Activated T-helper 1 cell treated with anti-CD3 and anti-CD28 coated beads, Interleukin-12 subunit alpha, Interleukin-12 subunit beta, Interleukin-2, Interleukin-4 antibody, amounts not matched to agents 30 ng/mL and 10 ng/mL and 1 ng/mL, durations not matched to agents 14 hours and 24 hours and 36 hours (primary cell): ENCODE measurements at regions of chr19 and their contacts with region 1.

Region 1: DNA sequence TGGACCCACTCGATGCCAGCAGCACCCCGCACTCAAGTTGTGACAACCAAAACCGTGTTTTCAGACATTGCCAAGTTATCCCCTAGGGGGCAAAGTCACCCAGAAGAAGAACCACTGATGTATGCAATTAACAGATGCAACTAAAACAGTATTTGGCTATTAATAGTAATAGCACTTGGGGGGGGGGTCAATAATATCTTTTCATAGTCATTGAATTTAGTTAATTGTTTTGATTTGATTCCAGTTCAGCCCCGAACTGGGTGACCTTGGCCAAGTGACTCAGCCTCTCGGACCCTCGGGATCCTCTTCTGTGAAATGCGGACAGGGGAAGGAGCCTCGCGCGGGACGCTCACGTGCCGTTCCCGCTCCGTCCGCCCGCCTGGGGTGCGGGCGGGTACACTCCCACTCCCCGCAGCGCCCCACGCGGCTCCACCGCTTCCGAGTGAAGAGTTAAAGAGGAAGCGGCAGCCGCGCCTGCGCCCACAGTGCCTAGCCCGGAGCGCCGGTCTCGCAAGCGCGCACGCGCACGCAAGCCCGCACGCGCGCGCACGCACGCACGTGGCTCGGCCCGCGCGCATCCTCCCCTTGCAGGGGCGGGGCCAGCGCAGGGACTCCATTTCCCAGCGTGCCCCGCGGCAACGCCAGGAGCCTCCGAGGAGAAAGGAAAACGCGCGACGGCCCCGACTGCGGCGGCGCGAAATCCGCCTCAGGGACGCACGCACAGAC is 449 bp upstream of the DAZAP1 start:
- DNase-seq: peak; percentile 100
- H3K4me3 Mint-ChIP-seq: peak overlapping the region; percentile 76
- H3K27ac Mint-ChIP-seq: peak overlapping the region; percentile 83
- H3K4me1 Mint-ChIP-seq: peaks cover 33% of the 10 kb centered on the region
- H3K27me3 Mint-ChIP-seq: peaks cover 7% of the 10 kb centered on the region

Region 2: DNA sequence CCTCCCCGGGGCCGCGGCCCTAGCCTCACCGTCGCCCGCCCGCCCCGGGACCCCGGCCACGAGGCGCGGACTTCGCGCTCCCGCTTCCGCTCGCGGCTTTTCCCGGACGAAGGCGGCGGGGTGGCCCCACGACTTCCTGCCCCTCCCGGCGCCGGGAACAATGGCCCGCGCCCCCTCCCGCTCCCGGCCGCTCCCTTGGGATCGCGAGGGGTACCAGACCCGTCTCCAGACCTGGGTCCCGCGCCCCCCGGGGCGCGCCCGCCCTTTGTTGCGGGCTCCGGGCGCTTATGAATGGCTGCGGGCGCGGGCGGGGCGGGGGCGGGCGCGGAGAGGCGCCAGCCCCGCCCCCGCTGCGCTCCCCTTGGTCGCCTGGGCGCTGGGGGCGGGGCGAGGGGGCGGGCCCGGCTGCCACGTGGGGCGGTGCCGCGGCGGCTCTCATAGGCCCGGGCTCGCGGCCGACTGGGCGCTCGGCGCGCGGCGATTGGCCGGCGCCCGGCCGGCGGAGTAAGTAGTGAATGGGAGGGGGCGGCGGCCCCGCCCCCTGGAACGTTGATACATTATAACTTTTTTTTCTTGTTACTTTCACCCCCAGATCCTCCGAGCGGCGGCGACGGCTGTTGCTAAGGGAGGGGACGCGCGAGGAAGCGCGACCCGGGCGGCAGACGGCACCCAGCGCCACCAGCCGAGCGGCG is 157.5 kb before region 1 on chr19:
- intact Hi-C with region 1: no loop called
- DNase-seq: peak; percentile 91
- H3K4me3 Mint-ChIP-seq: peak overlapping the region; percentile 82
- H3K27ac Mint-ChIP-seq: peak overlapping the region; percentile 86
- H3K4me1 Mint-ChIP-seq: peaks cover 5% of the 10 kb centered on the region
- H3K27me3 Mint-ChIP-seq: no peaks in the 10 kb centered on the region

Region 3: DNA sequence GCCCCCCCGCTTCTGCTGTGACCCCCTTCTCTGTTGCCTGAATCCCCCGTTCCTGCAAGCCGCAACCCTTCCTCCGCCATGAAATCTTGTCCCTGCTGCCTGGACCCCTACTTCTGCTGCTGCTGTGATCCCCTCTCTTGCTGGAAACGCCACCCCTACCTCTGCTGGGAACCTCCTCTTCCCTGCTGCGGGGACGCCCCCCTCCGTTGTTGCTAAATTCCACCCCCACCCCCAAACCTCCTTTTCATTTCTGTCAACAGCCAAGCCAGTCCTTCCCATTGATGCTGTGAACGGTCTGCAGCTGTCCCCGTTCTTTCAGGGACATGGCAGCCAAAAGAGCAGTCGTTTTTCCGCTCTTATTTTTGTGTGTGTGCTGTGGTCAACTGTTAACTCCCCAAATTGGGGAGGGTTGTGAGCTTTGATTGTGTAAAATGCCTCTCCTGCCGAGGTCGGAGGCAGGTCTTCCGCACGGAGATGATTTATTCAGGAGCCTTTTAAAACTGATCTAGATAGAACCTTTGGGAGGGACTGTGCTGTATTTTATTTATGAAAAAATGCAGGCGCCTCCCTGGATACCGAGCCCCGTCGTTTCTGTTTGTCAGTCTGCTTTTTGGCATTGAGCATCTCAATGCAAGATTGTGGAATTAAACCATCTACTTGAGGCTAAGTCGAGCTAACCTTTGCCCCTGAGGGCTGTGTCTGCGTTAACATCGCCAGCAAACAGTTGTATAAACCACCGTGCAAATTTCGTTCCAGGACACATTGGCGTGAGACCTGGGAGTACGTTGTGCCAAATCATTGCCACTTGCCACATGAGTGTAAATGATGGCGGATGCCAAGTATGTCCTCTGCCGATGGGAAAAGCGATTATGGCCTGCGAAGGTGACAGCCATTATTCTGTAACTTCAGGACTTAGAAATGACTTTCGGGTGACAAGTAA is 51.1 kb before region 1 on chr19:
- intact Hi-C with region 1: loop called (anchors 2 kb)
- DNase-seq: no peak
- H3K4me3 Mint-ChIP-seq: peak overlapping the region; percentile 88
- H3K27ac Mint-ChIP-seq: peak overlapping the region; percentile 82
- H3K4me1 Mint-ChIP-seq: peaks cover 11% of the 10 kb centered on the region
- H3K27me3 Mint-ChIP-seq: peaks cover 5% of the 10 kb centered on the region

Region 4: DNA sequence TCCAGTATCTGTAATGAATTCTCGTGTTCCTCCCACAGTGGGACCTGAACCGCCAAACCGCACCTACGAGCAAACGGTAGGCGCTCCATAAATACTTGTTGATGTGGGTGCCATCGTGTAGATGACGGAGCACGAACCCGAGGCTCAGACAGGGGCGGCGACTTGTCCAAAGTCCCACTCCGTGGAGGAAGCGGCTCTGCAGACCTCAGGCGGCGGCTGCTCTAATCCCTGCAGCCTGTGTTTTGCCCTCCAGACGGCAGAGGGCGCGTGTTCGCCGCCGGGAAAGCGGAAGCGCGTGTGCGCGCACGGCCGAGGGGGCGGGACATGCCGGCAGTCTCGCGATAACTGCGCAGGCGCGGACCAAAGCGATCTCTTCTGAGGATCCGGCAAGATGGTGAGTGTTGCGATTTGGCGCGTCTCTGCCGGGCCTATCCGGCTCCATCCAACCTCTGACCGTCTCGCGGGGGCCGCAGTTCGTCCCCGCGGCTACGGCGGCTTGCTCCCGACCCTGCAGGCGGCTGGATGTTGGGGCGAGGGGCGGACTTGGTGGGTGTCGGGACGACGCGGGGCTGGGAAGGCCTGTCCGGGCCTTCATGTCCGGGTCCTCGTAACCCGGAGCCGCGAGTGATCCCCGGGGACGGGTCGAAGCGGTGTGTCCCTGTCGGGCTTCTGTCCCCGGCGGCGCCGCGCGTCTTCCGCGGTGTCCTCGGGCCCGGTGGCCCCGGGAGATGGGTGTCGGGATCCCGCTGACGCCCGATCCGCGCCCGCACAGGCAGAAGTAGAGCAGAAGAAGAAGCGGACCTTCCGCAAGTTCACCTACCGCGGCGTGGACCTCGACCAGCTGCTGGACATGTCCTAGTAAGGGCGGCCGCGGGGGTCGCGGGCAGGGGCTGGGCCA is 31.3 kb after region 1 on chr19 and contains the start of gene RPS15:
- intact Hi-C with region 1: loop called (anchors 1 kb)
- DNase-seq: peak; percentile 95
- H3K4me3 Mint-ChIP-seq: peak within 1 kb of the TSS; percentile 98
- H3K27ac Mint-ChIP-seq: peak within 1 kb of the TSS; percentile 99
- H3K4me1 Mint-ChIP-seq: no peaks in the 10 kb centered on the region
- H3K27me3 Mint-ChIP-seq: no peaks in the 10 kb centered on the region
- total RNA-seq, gene RPS15: 1,387 and 1,455 TPM in 2 replicates